ENCODE measurements at regions of chr10 and their contacts with region 1.

Region 1: GRCh38 chr10:89426230-89426868 is 12.0 kb downstream of the IFIT5 start:
- DNase-seq: peak; percentile 19
- H3K4me3 Mint-ChIP-seq: no peak overlapping the region
- H3K27ac Mint-ChIP-seq: no peak overlapping the region
- H3K4me1 Mint-ChIP-seq: no peaks in the 10 kb centered on the region
- H3K27me3 Mint-ChIP-seq: no peaks in the 10 kb centered on the region

Region 2: GRCh38 chr10:89563861-89564478 is 137.6 kb after region 1 on chr10:
- CTCF ChIA-PET with region 1: interaction called, 13 read pairs
- intact Hi-C with region 1: loop called (anchors 1 kb)
- DNase-seq: peak; percentile 27
- H3K4me3 Mint-ChIP-seq: no peak overlapping the region
- H3K27ac Mint-ChIP-seq: no peak overlapping the region
- H3K4me1 Mint-ChIP-seq: no peaks in the 10 kb centered on the region
- H3K27me3 Mint-ChIP-seq: peaks cover 8% of the 10 kb centered on the region

Region 3: DNA sequence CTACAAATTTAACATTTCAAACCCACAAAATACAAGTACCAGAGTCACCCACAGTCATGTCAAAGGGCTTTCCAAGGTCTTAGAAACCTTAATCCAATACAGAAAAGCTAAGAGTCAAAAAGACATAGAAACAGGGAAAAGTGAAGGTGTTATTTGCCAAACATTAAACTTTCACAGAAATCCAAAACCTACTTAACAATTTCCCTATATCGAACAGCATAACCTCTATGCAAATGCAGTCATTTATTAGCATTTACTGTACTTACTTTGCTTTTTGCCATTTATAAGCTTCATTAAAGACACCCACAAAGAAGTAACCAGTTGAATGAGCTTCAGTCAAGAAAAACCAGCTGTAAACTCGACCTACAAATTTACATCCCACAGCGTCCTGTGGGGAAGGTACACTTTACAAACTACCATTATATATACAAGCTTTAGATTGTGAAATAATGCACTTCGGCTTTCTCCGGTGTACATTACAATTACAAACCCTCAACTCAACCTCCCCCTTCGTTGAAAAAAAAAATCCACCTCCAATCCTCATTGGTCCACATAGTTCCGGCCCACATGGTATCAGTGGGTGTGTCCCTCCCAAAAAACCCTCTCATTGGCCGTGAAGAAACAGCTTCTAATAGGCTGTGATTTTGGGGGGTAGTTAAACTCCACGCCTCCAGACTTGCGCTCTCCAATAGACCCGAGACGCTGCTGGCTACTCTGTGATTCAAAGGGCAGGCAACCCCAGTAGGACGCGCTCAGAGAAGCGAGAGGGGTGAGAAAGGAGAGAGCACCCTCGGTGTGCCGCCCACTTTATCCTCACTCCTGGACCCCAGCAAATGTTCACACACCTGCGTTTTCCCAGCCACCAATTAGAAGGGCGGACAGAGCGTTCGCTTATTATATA is 217.3 kb after region 1 on chr10:
- CTCF ChIA-PET with region 1: no interaction called
- intact Hi-C with region 1: loop called (anchors 5 kb)
- DNase-seq: peak; percentile 79
- H3K4me3 Mint-ChIP-seq: no peak overlapping the region
- H3K27ac Mint-ChIP-seq: no peak overlapping the region
- H3K4me1 Mint-ChIP-seq: peaks cover 8% of the 10 kb centered on the region
- H3K27me3 Mint-ChIP-seq: peaks cover 4% of the 10 kb centered on the region

Region 4: DNA sequence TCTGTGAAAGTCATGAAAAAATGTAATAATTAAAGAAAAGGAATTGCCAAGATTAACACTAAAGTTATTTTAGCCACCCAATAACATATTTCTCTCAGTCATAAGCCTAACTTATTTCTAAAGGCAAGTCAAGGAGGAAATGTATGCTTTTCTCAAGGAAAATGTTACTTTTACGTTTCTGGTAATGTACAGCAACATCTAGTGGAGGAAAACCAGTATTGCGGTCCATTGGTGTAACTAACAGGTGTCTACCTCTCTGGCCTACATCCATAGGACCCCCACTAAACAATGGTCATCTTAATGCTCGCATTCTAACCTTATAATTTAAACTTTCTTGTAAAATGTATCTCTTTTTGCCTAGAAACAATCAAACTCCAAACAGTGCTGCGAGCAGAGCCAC is 712.5 kb after region 1 on chr10:
- CTCF ChIA-PET with region 1: no interaction called
- intact Hi-C with region 1: loop called (anchors 5 kb)
- DNase-seq: no peak
- H3K4me3 Mint-ChIP-seq: no peak overlapping the region
- H3K27ac Mint-ChIP-seq: no peak overlapping the region
- H3K4me1 Mint-ChIP-seq: no peaks in the 10 kb centered on the region
- H3K27me3 Mint-ChIP-seq: peaks cover 3% of the 10 kb centered on the region